GM23248 (cell line): ENCODE measurements at regions of chr11 and their contacts with region 1.

Region 1: DNA sequence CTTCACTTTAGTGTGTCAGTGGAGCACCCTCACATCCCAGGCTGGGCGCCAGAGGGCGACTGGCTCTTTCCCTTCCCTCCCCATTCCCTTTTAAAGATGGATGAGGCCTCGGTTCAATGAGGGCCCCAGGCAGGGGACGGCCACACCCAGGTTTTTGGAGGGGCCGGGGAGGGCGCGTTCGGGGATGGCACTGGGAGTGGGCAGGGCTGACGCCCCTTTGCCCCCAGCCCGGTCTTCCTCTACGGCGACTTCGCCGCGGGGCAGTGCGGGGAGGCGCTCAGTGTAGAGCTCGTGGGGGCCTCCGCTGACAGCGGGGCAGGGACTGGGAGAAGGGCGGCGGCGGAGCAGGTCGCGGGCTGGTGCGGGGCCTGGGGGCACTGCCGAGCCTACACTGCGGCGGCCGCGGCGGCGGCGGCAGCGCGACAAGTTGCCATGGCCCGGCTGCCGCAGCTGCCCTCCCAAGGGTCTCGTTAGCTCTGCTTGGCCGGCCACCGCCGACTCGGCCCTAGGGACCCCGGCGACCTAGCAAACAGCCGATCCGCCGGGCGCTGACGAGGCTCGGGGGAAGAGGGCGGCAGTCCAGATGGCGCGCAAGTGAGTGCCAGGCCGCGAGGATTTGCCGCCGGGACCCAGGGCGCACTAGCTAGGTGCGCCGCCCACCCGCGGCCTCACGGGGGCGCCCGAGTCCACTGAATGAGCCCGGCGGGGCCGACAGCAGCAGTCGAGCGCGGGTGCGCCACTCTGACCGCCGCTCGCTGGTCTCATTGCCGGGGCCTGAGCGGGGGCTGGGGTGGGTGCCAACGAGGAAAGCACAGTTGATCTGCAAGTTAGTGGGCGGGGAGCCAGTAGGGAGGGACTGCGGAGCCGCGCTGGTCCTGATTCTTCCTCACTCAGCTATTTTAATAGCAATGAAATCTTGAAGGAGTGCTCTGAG is 92.7 kb downstream of the RRM1 start:
- DNase-seq: peak; percentile 90
- H3K4me3 ChIP-seq: peak overlapping the region; percentile 78
- H3K27ac ChIP-seq: no peak overlapping the region
- H3K4me1 ChIP-seq: no peaks in the 10 kb centered on the region
- H3K27me3 ChIP-seq: no peaks in the 10 kb centered on the region

Region 2: GRCh38 chr11:4480574-4481566 is 293.5 kb after region 1 on chr11:
- in situ Hi-C with region 1: loop called (anchors 25 kb)
- DNase-seq: peak; percentile 61
- H3K4me3 ChIP-seq: no peak overlapping the region
- H3K27ac ChIP-seq: no peak overlapping the region
- H3K4me1 ChIP-seq: peaks cover 8% of the 10 kb centered on the region; the same call in 1 of the 2 replicates
- H3K27me3 ChIP-seq: peaks cover 12% of the 10 kb centered on the region

Region 3: GRCh38 chr11:4991060-4991459 is 803.7 kb after region 1 on chr11:
- in situ Hi-C with region 1: loop called (anchors 25 kb)
- DNase-seq: peak; percentile 7
- H3K4me3 ChIP-seq: no peak overlapping the region
- H3K27ac ChIP-seq: no peak overlapping the region
- H3K4me1 ChIP-seq: no peaks in the 10 kb centered on the region
- H3K27me3 ChIP-seq: no peaks in the 10 kb centered on the region